ENCODE measurements at regions of chr1 and their contacts with region 1.

Region 1: GRCh38 chr1:83615370-83615769 is 383.6 kb downstream of the TTLL7 start:
- DNase-seq: no peak
- H3K4me3 ChIP-seq: no peak overlapping the region
- H3K27ac ChIP-seq: no peak overlapping the region
- H3K4me1 ChIP-seq: no peaks in the 10 kb centered on the region
- H3K27me3 ChIP-seq: no peaks in the 10 kb centered on the region
- CTCF ChIP-seq: no peak
- EP300 ChIP-seq: no peak
- POLR2A ChIP-seq: no peak

Region 2: GRCh38 chr1:82934074-82934473 is 681.3 kb before region 1 on chr1:
- in situ Hi-C with region 1: no loop called
- intact Hi-C with region 1: no loop called
- DNase-seq: no peak
- H3K4me3 ChIP-seq: no peak overlapping the region
- H3K27ac ChIP-seq: no peak overlapping the region
- H3K4me1 ChIP-seq: no peaks in the 10 kb centered on the region
- H3K27me3 ChIP-seq: no peaks in the 10 kb centered on the region
- CTCF ChIP-seq: no peak
- EP300 ChIP-seq: no peak
- POLR2A ChIP-seq: no peak

Region 3: DNA sequence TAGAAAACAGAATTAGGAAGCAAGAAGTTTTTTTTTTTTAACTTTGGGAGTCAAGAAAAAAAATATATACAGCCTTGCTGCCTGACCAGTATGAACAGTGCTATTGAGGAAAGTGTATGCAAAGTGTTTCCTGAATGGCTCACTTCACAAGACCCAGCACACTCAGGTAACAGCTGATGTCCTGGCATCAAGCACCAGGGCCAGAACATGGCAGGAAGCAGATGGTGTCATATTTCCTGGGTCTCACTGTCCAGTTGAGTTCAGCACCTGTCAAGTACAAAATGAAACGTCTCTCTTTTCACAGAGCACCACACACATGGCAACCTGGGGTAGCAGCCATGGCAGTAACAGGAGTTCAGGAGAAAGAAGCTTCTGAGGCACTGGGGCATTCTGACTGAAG is 11.2 kb after region 1 on chr1:
- in situ Hi-C with region 1: no loop called
- intact Hi-C with region 1: loop called (anchors 1 kb)
- DNase-seq: no peak
- H3K4me3 ChIP-seq: no peak overlapping the region
- H3K27ac ChIP-seq: no peak overlapping the region
- H3K4me1 ChIP-seq: no peaks in the 10 kb centered on the region
- H3K27me3 ChIP-seq: no peaks in the 10 kb centered on the region
- CTCF ChIP-seq: no peak
- EP300 ChIP-seq: no peak
- POLR2A ChIP-seq: no peak

Measured in transverse colon (tissue), 4 donors.